K562 (cell line): ENCODE measurements at regions of chr3 and their contacts with region 1.

Region 1: DNA sequence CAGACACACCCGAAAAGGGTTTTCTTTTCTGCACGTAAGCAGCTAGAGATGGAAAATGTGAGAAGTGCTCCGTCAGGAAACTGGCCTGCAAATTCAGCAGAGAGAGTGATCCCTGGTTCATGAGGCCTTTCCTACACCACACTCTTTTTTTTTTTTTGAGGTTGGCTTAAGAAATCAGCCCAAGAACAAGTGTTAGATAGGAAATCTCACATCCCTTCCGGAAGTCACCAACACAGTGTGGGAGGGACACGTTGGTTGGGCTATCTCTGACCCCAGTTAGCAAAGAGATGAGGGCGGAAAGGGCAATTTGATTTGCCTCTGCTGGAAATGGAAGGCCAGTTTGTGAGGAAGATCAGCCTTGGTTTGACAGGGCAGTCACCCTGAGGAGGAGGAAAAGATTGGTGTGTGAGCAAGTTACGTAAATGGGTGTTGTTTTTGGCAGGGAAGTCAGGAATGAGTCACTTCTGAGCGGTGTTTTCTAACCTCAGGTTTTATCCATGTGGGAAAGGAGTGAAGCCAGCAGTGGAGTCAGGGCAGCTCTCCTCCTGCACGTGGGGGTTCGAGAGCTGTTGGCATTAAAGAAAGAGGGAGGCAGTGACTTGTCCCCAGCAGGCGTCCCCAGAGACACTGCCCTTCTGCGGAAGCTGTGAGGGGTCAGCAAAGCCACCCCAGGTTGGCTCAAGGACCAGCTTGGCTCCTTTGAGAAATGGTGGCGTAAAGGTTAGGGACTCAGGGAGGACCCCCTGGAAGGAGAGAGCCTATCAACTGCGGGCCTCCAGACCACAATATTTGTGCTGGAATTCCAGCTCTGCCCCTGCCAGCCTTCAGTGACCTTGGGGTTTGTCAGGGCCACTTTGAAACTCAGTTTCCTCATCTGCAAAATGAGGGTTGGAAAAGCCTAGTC is 237.6 kb upstream of the BHLHE40 start:
- DNase-seq: peak; percentile 85 to 95 (median 86)
- ATAC-seq: peak; percentile 78
- H3K4me3 ChIP-seq: no peak overlapping the region
- H3K27ac ChIP-seq: peak overlapping the region; percentile 89
- H3K4me1 ChIP-seq: peaks cover 44 to 75% of the 10 kb centered on the region in 2 experiments
- H3K27me3 ChIP-seq: no peaks in the 10 kb centered on the region
- CTCF ChIP-seq: peak in 1 of 3 experiments; percentile 17; a peak in 1 of 6 replicates
- EP300 ChIP-seq: peak; percentile 94
- POLR2A ChIP-seq: peak; percentile 73
- RAD21 ChIP-seq: peak in 1 of 2 experiments; percentile 17; a peak in 1 of 4 replicates

Region 2: DNA sequence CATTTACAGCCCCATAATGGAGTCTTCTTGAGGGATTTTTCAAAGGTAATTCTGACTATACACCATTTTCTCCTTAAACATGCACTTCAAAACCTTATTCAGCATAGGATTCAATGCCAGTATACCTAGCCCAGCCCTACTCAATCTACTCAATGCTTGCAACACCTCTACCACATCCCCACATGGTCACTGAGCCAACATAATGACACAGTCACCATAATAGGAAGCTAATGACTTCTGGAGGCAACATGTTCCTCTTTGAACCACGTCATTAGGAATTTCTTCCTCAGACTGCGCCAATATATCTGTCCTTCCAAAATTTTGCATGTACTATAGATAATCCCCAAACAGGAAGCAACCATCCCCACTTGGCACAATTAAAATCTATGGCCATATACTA is 592.4 kb before region 1 on chr3:
- CTCF ChIA-PET with region 1: no interaction called
- POLR2A ChIA-PET with region 1: no interaction called
- in situ Hi-C with region 1: no loop called
- intact Hi-C with region 1: no loop called
- DNase-seq: no peak
- ATAC-seq: no peak
- H3K4me3 ChIP-seq: no peak overlapping the region
- H3K27ac ChIP-seq: no peak overlapping the region
- H3K4me1 ChIP-seq: no peaks in the 10 kb centered on the region
- H3K27me3 ChIP-seq: no peaks in the 10 kb centered on the region
- CTCF ChIP-seq: no peak
- EP300 ChIP-seq: no peak
- POLR2A ChIP-seq: no peak
- RAD21 ChIP-seq: no peak

Region 3: GRCh38 chr3:4814305-4814903 is 72.7 kb after region 1 on chr3:
- CTCF ChIA-PET with region 1: no interaction called
- POLR2A ChIA-PET with region 1: interaction called, 5 read pairs
- in situ Hi-C with region 1: no loop called
- intact Hi-C with region 1: loop called (anchors 1 kb)
- DNase-seq: peak; percentile 96 to 99 (median 98)
- ATAC-seq: peak; percentile 93
- H3K4me3 ChIP-seq: peak overlapping the region; percentile 39
- H3K27ac ChIP-seq: peak overlapping the region; percentile 93
- H3K4me1 ChIP-seq: peaks cover 16 to 67% of the 10 kb centered on the region in 2 experiments
- H3K27me3 ChIP-seq: no peaks in the 10 kb centered on the region
- CTCF ChIP-seq: no peak
- EP300 ChIP-seq: peak; percentile 96
- POLR2A ChIP-seq: peak; percentile 84
- RAD21 ChIP-seq: peak in 1 of 2 experiments; percentile 19; a peak in 2 of 4 replicates

Region 4: DNA sequence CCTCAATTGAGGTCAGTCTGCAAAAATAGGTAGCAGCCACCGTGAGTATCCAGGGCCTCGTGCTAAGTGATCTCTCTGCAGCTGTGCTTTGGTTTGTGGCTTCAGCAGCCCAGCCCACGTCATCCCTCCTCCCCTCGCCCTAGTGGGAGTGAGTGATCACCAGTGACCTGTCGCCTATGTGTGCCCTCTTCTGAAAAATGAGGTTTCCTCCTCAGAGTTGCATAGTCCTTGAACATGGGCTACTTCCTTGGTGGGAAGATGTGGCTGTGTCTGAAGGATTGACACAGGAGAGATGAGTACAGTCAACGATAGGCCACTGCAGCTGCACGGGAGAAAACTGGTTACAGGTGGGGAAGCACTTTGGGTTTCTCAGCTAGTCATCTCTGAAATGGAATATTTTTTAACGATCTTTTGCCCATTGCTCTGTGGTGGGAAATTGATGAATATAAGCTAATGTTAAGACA is 92.8 kb after region 1 on chr3:
- CTCF ChIA-PET with region 1: no interaction called
- POLR2A ChIA-PET with region 1: no interaction called
- in situ Hi-C with region 1: no loop called
- intact Hi-C with region 1: loop called (anchors 2 kb)
- DNase-seq: peak in 3 of 4 experiments; percentile 38 to 55 (median 40)
- ATAC-seq: peak; percentile 40
- H3K4me3 ChIP-seq: no peak overlapping the region
- H3K27ac ChIP-seq: no peak overlapping the region
- H3K4me1 ChIP-seq: peaks cover 9 to 48% of the 10 kb centered on the region in 2 experiments
- H3K27me3 ChIP-seq: no peaks in the 10 kb centered on the region
- CTCF ChIP-seq: no peak
- EP300 ChIP-seq: no peak
- POLR2A ChIP-seq: no peak
- RAD21 ChIP-seq: 0 out of 4 replicates have a peak, but pooled peaks of 1 of the 2 experiments have one; percentile 5

Region 5: DNA sequence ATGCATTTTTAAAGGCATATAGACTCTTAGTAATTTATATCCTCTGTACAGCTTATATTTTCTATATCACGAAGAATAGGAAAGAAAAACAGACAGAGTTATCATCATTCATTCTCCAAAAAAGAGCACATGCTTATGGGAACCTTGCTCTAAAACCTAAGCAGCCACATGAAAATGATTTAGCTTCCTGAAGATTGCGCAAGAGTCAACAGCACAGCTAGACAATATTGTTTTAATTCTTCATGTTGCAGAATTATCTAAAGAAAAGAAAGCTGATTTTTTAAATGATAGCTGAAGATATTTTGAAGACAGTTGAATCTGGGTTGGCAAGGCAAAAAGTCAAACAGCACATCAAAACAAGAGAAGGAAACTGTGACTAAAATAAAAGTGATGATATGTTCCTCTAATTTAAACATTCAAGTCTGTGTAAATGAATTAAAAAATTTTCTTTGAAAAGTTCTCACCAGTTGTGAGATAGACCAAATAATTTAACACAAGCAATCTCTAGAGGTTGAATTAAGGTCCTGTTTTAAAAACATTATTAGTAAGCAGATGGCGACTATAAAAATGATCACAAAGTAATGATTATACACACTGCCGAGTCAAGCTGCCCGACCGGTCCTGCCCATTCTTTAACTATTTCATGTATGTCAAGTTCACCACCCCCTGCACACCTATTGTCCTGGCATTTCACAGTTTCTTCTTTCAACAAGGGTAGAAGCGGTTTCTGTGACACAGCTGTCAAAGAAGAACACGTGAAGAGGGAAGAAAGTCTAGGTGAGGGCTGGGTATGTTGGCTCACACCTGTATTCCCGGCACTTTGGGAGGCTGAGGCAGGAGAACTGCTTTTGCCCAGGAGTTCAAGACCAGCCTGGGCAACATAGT is 163.4 kb after region 1 on chr3:
- CTCF ChIA-PET with region 1: no interaction called
- POLR2A ChIA-PET with region 1: no interaction called
- in situ Hi-C with region 1: no loop called
- intact Hi-C with region 1: loop called (anchors 5 kb)
- DNase-seq: peak in 1 of 4 experiments; percentile 25
- ATAC-seq: no peak
- H3K4me3 ChIP-seq: no peak overlapping the region
- H3K27ac ChIP-seq: no peak overlapping the region
- H3K4me1 ChIP-seq: peaks cover 0 to 31% of the 10 kb centered on the region in 2 experiments; a peak in 4 of 5 replicates
- H3K27me3 ChIP-seq: no peaks in the 10 kb centered on the region
- CTCF ChIP-seq: no peak
- EP300 ChIP-seq: 0 out of 2 replicates have a peak, but pooled peaks have one; percentile 2
- POLR2A ChIP-seq: no peak
- RAD21 ChIP-seq: no peak

Region 6: DNA sequence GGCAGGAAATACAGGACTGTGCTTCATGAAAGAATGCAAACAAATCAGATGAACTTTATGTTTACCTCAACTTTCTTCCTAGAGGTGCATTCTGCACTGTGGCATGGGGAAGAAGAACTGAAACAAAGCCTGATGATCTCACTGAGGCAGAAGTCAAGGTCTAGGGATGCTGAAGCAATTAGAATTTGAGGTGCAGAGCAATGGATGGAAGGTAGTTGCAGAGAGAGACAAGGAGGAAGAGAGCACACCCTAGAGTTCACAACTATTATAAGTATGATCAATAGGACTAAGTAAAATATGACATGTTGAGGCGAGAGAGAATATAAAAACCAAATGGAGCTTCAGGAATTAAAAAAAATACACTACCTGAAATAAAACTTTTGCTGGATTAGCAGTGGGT is 865.9 kb after region 1 on chr3:
- CTCF ChIA-PET with region 1: no interaction called
- POLR2A ChIA-PET with region 1: no interaction called
- in situ Hi-C with region 1: no loop called
- intact Hi-C with region 1: no loop called
- DNase-seq: no peak
- ATAC-seq: peak; percentile 58
- H3K4me3 ChIP-seq: no peak overlapping the region
- H3K27ac ChIP-seq: no peak overlapping the region
- H3K4me1 ChIP-seq: no peaks in the 10 kb centered on the region
- H3K27me3 ChIP-seq: no peaks in the 10 kb centered on the region
- CTCF ChIP-seq: 0 out of 6 replicates have a peak, but pooled peaks of 1 of the 3 experiments have one; percentile 12
- EP300 ChIP-seq: no peak
- POLR2A ChIP-seq: no peak
- RAD21 ChIP-seq: peak in 1 of 2 experiments; percentile 34; a peak in 1 of 4 replicates